H1 (cell line): ENCODE measurements at regions of chr14 and their contacts with region 1.

Region 1: DNA sequence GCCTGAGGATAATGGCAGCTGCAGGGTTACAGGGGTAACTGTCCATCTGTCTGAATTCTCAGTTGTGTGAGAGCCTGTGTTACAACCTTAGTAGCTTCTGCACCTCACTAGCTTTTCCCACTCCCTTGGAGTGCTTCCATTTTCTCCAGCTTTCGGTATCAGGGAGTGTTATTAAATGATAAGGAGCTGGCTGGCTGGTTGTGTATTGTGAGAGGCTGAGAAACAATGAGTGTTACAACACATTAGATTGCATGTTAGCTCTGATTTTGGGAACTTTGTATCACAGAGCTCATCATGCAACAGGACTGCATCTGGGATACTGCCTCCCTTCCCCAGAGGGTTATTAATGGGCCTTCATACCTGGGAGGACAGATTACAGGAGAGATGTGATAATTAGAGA is 723.7 kb downstream of the DIO2 start:
- DNase-seq: no peak
- H3K4me3 ChIP-seq: no peak overlapping the region
- H3K27ac ChIP-seq: no peak overlapping the region
- H3K4me1 ChIP-seq: peaks cover 0 to 9% (median 2%) of the 10 kb centered on the region in 4 experiments; a peak in 5 of 7 replicates
- H3K27me3 ChIP-seq: peaks cover 0 to 1% (median 0%) of the 10 kb centered on the region in 4 experiments; a peak in 1 of 7 replicates
- CTCF ChIP-seq: no peak
- EP300 ChIP-seq: no peak
- POLR2A ChIP-seq: no peak
- RAD21 ChIP-seq: no peak

Region 2: DNA sequence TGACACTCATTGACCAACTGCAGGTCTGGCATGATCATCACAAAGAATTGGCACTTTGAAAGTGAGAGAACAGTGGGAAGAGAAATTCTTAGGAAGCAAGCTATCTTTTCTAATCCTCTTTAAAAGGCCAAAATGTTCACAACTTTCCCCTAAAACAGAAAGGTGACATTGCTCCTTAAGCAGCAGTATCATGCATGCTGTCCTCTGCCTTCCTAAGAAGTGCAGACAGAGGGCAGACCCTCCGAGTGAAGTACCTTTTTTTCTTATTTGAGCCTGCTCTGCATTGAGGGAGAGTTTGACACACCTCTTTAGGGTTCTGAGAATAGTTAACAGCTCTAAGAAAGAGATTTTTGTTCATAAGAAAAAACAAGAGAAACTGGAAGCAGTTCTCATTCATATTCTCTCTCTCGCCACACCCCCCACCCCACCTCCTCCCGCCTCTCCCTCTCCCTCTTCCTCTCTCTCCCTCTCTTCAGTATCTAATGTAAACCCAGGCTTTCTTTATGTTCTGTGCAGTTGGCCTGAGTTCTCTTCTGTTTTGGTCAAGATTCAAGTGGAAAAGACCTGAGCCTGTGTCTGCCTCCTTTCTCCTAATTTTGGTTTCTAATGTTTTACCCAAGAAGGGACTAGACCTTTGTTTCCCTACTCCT is 14.6 kb after region 1 on chr14:
- CTCF ChIA-PET with region 1: interaction called, 16 read pairs
- POLR2A ChIA-PET with region 1: no interaction called
- DNase-seq: no peak
- H3K4me3 ChIP-seq: no peak overlapping the region
- H3K27ac ChIP-seq: no peak overlapping the region
- H3K4me1 ChIP-seq: peaks cover 0 to 3% (median 1%) of the 10 kb centered on the region in 4 experiments; a peak in 2 of 7 replicates
- H3K27me3 ChIP-seq: no peaks in the 10 kb centered on the region
- CTCF ChIP-seq: peak in 1 of 3 experiments; percentile 32; a peak in 1 of 4 replicates
- EP300 ChIP-seq: no peak
- POLR2A ChIP-seq: no peak
- RAD21 ChIP-seq: peak in 1 of 2 experiments; percentile 18; a peak in 1 of 4 replicates